ENCODE measurements at regions of chr9 and their contacts with region 1.

Region 1: DNA sequence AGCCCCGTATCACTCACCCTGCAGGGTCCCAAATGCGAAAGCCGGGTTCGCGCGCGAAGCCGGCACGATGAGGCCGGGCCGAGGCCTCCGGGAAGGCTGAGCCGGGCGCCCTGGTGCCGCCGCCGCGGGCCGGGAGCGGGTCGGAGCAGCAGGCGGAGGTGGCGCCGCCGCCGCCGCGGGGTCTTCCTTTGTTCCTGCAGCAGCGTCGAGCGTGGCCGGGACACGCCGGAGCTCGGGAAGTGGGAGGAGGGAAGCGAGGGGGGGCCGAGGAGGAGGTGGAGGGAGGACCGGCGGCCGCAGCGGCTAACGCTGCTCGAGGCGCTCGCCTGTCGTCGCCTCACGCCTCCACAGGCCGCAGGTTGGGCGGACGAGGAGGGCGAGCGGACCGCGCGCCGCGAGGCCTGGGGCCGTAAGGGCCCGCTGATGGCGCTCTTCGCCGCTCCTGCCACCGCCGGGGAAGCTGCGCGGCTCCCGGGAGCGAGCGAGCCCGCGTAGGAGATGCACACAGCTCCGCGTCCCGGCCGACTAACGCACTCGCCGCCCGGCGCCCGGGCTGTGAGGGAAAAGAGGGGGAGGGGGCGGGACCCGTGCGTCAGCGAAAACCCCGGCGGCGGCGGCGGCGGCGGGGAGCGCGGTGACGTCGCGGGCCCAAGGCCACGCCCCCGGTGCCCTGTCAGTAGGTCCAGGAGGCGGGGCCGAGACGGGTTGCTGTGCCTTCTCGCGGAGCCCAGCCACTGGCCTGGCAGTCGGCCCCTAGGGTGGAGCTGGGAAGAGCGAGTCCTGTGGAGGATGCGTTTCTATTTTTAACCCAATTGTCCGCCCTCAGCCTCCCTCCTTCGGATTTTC is at the start of gene ZFAND5:
- DNase-seq: peak; percentile 89 to 93 (median 91)
- H3K4me3 ChIP-seq: peak within 1 kb of the TSS; percentile 98
- H3K4me3 Mint-ChIP-seq: peak within 1 kb of the TSS; percentile 90 to 97 (median 96)
- H3K27ac ChIP-seq: peak within 1 kb of the TSS; percentile 97
- H3K27ac Mint-ChIP-seq: peak within 1 kb of the TSS; percentile 96 to 100 (median 99)
- H3K4me1 ChIP-seq: peaks cover 43% of the 10 kb centered on the region
- H3K4me1 Mint-ChIP-seq: peaks cover 27 to 50% (median 37%) of the 10 kb centered on the region in 4 donors
- H3K27me3 ChIP-seq: no peaks in the 10 kb centered on the region
- H3K27me3 Mint-ChIP-seq: no peaks in the 10 kb centered on the region
- total RNA-seq, gene ZFAND5: 143 to 148 TPM

Region 2: GRCh38 chr9:72280913-72281500 is 83.9 kb before region 1 on chr9:
- CTCF ChIA-PET with region 1: interaction called, 12 read pairs
- POLR2A ChIA-PET with region 1: interaction called, 3 read pairs
- intact Hi-C with region 1: no loop called
- DNase-seq: peak; percentile 61 to 66 (median 64)
- H3K4me3 ChIP-seq: no peak overlapping the region
- H3K4me3 Mint-ChIP-seq: no peak overlapping the region
- H3K27ac ChIP-seq: no peak overlapping the region
- H3K27ac Mint-ChIP-seq: no peak overlapping the region
- H3K4me1 ChIP-seq: no peaks in the 10 kb centered on the region
- H3K4me1 Mint-ChIP-seq: no peaks in the 10 kb centered on the region
- H3K27me3 ChIP-seq: no peaks in the 10 kb centered on the region
- H3K27me3 Mint-ChIP-seq: peaks cover 0 to 1% of the 10 kb centered on the region in 2 donors

Region 3: GRCh38 chr9:72352911-72353388 is 12.0 kb before region 1 on chr9:
- CTCF ChIA-PET with region 1: interaction called, 3 read pairs
- POLR2A ChIA-PET with region 1: interaction called, 9 read pairs
- intact Hi-C with region 1: loop called (anchors 1 kb)
- DNase-seq: no peak
- H3K4me3 ChIP-seq: no peak overlapping the region
- H3K4me3 Mint-ChIP-seq: no peak overlapping the region
- H3K27ac ChIP-seq: no peak overlapping the region
- H3K27ac Mint-ChIP-seq: peak overlapping the region in 2 of 7 donors; percentile 2 to 35
- H3K4me1 ChIP-seq: peaks cover 4% of the 10 kb centered on the region
- H3K4me1 Mint-ChIP-seq: peaks cover 15 to 24% (median 19%) of the 10 kb centered on the region in 4 donors
- H3K27me3 ChIP-seq: no peaks in the 10 kb centered on the region
- H3K27me3 Mint-ChIP-seq: no peaks in the 10 kb centered on the region

Region 4: GRCh38 chr9:72526901-72527800 is 162.2 kb after region 1 on chr9:
- CTCF ChIA-PET with region 1: interaction called, 4 read pairs
- POLR2A ChIA-PET with region 1: interaction called, 96 read pairs
- intact Hi-C with region 1: loop called (anchors 1 kb)
- DNase-seq: peak; percentile 74 to 93 (median 79)
- H3K4me3 ChIP-seq: peak overlapping the region; percentile 54 to 76
- H3K4me3 Mint-ChIP-seq: peak overlapping the region; percentile 81 to 94 (median 86)
- H3K27ac ChIP-seq: peak overlapping the region; percentile 68
- H3K27ac Mint-ChIP-seq: peak overlapping the region; percentile 92 to 98 (median 96)
- H3K4me1 ChIP-seq: peaks cover 27% of the 10 kb centered on the region
- H3K4me1 Mint-ChIP-seq: peaks cover 22 to 46% (median 34%) of the 10 kb centered on the region in 4 donors
- H3K27me3 ChIP-seq: no peaks in the 10 kb centered on the region
- H3K27me3 Mint-ChIP-seq: no peaks in the 10 kb centered on the region

Region 5: DNA sequence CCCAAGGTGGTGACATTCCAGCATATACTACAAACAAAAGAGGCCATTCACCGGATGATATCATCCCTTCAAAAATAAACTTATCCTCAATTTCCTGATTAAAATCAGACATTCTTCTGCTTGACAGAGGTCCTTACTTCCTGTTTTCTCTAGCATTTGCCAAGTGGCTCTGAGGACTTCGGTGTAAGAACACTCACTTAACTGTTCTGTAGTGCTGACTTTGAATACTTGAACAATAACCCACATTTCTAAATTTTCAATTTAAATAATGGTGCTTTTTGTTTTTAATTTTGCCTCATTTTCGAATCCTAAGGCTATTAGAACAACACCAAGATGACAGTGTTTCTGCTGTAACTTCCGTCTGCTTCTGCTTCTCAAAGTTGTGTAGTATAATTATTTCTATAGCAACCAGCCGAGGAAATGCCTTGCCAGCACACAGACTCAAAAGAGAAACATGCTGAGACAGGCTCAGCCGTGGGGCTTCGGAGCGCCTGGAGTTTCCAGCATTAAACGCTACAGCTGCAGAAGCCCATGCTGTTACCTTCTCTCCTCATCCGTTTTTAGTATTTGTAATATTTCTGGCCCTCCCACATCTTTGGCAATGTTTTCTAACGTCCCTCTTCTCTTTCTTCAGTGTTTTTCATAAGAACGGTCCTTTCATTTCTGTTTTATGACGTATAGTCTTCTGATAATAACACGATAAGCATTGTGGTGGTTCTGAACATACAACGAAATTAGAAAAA is 767.3 kb after region 1 on chr9:
- CTCF ChIA-PET with region 1: no interaction called
- POLR2A ChIA-PET with region 1: interaction called, 7 read pairs
- intact Hi-C with region 1: loop called (anchors 5 kb)
- DNase-seq: peak; percentile 84 to 90 (median 89)
- H3K4me3 ChIP-seq: peak overlapping the region; percentile 62 to 75
- H3K4me3 Mint-ChIP-seq: peak overlapping the region; percentile 70 to 95 (median 92)
- H3K27ac ChIP-seq: peak overlapping the region; percentile 91
- H3K27ac Mint-ChIP-seq: peak overlapping the region; percentile 84 to 99 (median 97)
- H3K4me1 ChIP-seq: peaks cover 47% of the 10 kb centered on the region
- H3K4me1 Mint-ChIP-seq: peaks cover 24 to 50% (median 35%) of the 10 kb centered on the region in 4 donors
- H3K27me3 ChIP-seq: no peaks in the 10 kb centered on the region
- H3K27me3 Mint-ChIP-seq: no peaks in the 10 kb centered on the region

Measured in CD4-positive, alpha-beta memory T cell (primary cell).